Psoas muscle (tissue), 8 donors: ENCODE measurements at regions of chr9 and their contacts with region 1.

Region 1: GRCh38 chr9:110058304-110058953 is 149.5 kb downstream of the C9orf152 start:
- DNase-seq: peak in 1 of 2 donors; percentile 29
- ATAC-seq: peak; percentile 66 to 85 (median 79)
- H3K4me3 ChIP-seq: no peak overlapping the region
- H3K27ac ChIP-seq: no peak overlapping the region
- H3K4me1 ChIP-seq: no peaks in the 10 kb centered on the region
- H3K27me3 ChIP-seq: peaks cover 0 to 4% (median 0%) of the 10 kb centered on the region in 3 donors
- CTCF ChIP-seq: peak; percentile 69

Region 2: GRCh38 chr9:109579191-109579948 is 479.1 kb before region 1 on chr9:
- intact Hi-C with region 1: loop called (anchors 5 kb)
- DNase-seq: no peak
- ATAC-seq: no peak
- H3K4me3 ChIP-seq: no peak overlapping the region
- H3K27ac ChIP-seq: no peak overlapping the region
- H3K4me1 ChIP-seq: no peaks in the 10 kb centered on the region
- H3K27me3 ChIP-seq: no peaks in the 10 kb centered on the region
- CTCF ChIP-seq: no peak

Region 3: GRCh38 chr9:110007477-110008270 is 50.8 kb before region 1 on chr9:
- intact Hi-C with region 1: no loop called
- DNase-seq: no peak
- ATAC-seq: no peak
- H3K4me3 ChIP-seq: no peak overlapping the region
- H3K27ac ChIP-seq: no peak overlapping the region
- H3K4me1 ChIP-seq: no peaks in the 10 kb centered on the region
- H3K27me3 ChIP-seq: no peaks in the 10 kb centered on the region
- CTCF ChIP-seq: no peak